ENCODE measurements at regions of chr14 and their contacts with region 1.

Region 1: GRCh38 chr14:64764641-64765520 is 60.7 kb downstream of the PLEKHG3 start:
- DNase-seq: peak; percentile 78 to 89 (median 86)
- H3K4me3 ChIP-seq: no peak overlapping the region
- H3K27ac ChIP-seq: peak overlapping the region in 1 of 2 donors; percentile 94
- H3K4me1 ChIP-seq: peaks cover 26% of the 10 kb centered on the region
- H3K27me3 ChIP-seq: no peaks in the 10 kb centered on the region
- CTCF ChIP-seq: peak; percentile 88 to 92 (median 91)
- EP300 ChIP-seq: no peak
- POLR2A ChIP-seq: no peak

Region 2: DNA sequence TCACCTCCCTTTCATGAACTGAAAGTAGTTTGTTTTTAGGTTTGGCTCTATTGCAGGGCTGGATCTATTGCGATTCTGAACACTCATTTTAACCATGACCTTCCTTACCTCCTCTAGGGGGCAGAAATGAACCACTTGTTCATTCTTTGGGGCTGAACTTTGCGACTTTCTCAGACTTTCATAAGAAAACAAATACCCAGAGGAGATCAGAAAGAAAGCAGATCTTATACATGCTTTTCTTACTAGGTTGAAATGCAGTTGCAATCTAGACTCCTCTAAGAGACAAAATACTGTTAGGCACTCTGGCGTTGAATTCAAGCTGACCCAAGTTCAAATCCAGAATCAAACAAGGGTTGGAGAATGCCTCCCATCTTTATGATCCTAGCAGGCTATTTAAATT is 93.3 kb before region 1 on chr14:
- intact Hi-C with region 1: loop called (anchors 2 to 5 kb)
- DNase-seq: no peak
- H3K4me3 ChIP-seq: no peak overlapping the region
- H3K27ac ChIP-seq: no peak overlapping the region
- H3K4me1 ChIP-seq: no peaks in the 10 kb centered on the region
- H3K27me3 ChIP-seq: no peaks in the 10 kb centered on the region
- CTCF ChIP-seq: peak; percentile 67 to 82 (median 79)
- EP300 ChIP-seq: no peak
- POLR2A ChIP-seq: no peak

Region 3: DNA sequence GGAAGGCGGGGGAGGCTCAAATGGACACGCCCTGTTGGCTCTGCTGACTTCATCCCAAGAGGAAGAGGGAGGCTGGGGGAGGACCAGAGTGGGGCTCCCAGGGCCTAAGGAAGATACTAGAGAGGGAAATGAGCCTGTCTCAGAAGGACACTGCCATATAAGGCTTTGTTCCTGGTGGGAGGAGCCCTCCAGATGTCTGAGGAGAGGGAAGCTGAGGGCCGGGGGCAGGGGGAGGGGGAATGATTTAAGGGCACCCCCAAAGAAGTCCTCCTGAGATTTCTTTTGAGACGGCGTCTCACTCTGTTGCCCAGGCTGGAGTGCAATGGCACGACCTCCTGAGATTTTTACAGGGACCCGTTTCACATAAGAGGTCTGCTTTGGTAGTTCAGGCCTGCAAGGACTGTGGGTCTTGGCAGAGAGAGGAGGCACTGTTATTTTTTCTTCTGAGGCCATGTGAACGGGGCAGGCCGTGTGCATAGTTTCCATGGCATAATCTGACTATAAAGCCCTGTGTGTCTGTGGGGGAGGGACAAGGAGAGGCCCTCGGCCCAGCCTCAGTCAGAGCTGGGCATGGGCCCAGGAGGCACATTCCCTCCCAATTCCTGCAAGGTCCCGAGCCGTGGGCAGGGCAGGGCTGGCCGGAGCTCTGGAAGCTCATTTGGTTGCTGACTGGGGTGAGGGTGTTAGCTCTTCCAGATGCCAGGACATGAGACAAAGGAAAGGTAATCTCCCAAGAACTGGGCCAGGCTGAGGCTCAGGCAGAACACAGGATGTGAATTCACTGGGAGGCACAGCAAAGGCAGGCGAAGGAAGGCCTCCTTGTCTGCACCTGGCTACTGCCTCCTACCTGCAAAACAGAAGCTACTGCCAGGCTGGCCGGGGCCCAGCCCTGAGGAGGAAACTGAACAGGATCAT is 82.8 kb before region 1 on chr14:
- intact Hi-C with region 1: loop called in 2 of 4 experiments (anchors 2 to 5 kb)
- DNase-seq: peak; percentile 69 to 88 (median 79)
- H3K4me3 ChIP-seq: no peak overlapping the region
- H3K27ac ChIP-seq: peak overlapping the region; percentile 17 to 72
- H3K4me1 ChIP-seq: peaks cover 18% of the 10 kb centered on the region
- H3K27me3 ChIP-seq: no peaks in the 10 kb centered on the region
- CTCF ChIP-seq: no peak
- EP300 ChIP-seq: peak; percentile 38
- POLR2A ChIP-seq: no peak

Region 4: GRCh38 chr14:64704143-64704742 is 60.6 kb before region 1 on chr14 and contains the start of gene PLEKHG3:
- intact Hi-C with region 1: loop called in 2 of 4 experiments (anchors 2 to 5 kb)
- DNase-seq: peak; percentile 85 to 91 (median 89)
- H3K4me3 ChIP-seq: peak within 1 kb of the TSS; percentile 82
- H3K27ac ChIP-seq: peak within 1 kb of the TSS; percentile 68 to 93
- H3K4me1 ChIP-seq: peaks cover 29% of the 10 kb centered on the region
- H3K27me3 ChIP-seq: no peaks in the 10 kb centered on the region
- CTCF ChIP-seq: no peak
- EP300 ChIP-seq: no peak
- POLR2A ChIP-seq: peak; percentile 42
- total RNA-seq, gene PLEKHG3: 17.5 to 92.9 (median 78.4) TPM

Region 5: GRCh38 chr14:64960762-64961278 is 195.9 kb after region 1 on chr14:
- intact Hi-C with region 1: no loop called
- DNase-seq: no peak
- H3K4me3 ChIP-seq: no peak overlapping the region
- H3K27ac ChIP-seq: no peak overlapping the region
- H3K4me1 ChIP-seq: peaks cover 4% of the 10 kb centered on the region
- H3K27me3 ChIP-seq: no peaks in the 10 kb centered on the region
- CTCF ChIP-seq: no peak
- EP300 ChIP-seq: no peak
- POLR2A ChIP-seq: no peak

Measured in ovary (tissue), 10 donors.